Pancreas (tissue), 10 donors: ENCODE measurements at regions of chr1 and their contacts with region 1.

Region 1: DNA sequence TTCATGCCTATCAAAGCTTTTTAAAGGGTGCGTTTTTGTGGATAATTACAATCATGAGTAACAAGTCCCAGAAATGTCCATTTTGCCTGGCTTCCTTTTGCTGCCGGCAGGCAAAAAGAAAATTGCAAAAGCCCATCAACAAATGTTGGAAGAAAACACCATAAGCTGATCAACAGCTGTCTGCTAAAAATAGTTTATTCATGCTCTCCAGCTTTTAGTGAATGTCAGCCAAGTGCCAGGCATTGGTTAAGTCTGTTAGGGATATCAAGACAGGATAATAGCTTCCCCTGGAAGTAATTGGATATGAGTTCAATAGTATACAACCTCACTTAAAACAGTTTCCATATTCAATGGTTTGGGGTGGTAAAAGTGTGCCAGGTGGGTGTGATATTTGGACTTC is 13.6 kb upstream of the AGMAT start:
- DNase-seq: no peak
- ATAC-seq: no peak
- H3K4me3 ChIP-seq: no peak overlapping the region
- H3K27ac ChIP-seq: no peak overlapping the region
- H3K4me1 ChIP-seq: peaks cover 0 to 4% (median 0%) of the 10 kb centered on the region in 3 donors
- H3K27me3 ChIP-seq: no peaks in the 10 kb centered on the region
- CTCF ChIP-seq: no peak

Region 2: DNA sequence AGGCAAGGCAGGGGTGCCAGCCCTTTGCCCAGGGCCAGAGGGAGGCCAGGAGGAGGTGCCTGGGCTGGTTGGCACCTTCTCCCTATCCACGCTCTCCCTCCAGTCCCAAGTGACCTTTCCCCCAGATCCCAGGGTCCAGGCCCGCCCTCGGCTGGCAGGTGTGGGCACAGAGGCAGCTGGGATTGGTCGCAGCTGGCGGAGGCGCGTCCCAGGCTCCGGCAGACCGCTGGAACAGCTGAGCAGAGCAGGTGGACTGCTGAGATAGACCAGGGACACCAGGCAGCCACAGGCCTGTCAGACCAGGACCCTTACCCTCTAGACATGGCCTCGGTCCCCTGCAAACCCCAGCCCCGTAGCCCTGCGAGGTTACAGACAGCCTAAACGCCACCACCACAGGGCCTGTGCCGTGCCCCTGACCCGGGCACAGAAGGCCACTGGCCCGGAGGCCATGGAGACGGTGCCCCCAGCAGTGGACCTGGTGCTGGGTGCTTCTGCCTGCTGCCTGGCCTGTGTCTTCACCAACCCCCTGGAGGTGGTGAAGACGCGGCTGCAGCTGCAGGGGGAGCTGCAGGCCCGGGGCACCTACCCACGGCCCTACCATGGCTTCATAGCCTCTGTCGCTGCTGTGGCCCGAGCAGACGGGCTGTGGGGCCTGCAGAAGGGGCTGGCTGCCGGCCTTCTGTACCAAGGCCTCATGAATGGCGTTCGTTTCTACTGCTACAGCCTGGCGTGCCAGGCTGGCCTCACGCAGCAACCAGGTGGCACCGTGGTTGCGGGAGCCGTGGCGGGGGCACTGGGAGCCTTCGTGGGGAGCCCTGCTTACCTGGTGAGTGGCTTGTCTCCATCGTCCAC is 137.8 kb after region 1 on chr1 and contains the start of gene SLC25A34:
- intact Hi-C with region 1: loop called in 2 of 3 experiments (anchors 5 to 10 kb)
- DNase-seq: peak; percentile 92 to 99 (median 96)
- ATAC-seq: peak; percentile 88 to 91 (median 89)
- H3K4me3 ChIP-seq: peak within 1 kb of the TSS in 2 of 4 donors; percentile 12 to 20
- H3K27ac ChIP-seq: peak within 1 kb of the TSS; percentile 79 to 97 (median 84)
- H3K4me1 ChIP-seq: peaks cover 32 to 37% (median 37%) of the 10 kb centered on the region in 3 donors
- H3K27me3 ChIP-seq: no peaks in the 10 kb centered on the region
- CTCF ChIP-seq: no peak
- total RNA-seq, gene SLC25A34: 0.57 to 1.9 (median 1.8) TPM

Region 3: DNA sequence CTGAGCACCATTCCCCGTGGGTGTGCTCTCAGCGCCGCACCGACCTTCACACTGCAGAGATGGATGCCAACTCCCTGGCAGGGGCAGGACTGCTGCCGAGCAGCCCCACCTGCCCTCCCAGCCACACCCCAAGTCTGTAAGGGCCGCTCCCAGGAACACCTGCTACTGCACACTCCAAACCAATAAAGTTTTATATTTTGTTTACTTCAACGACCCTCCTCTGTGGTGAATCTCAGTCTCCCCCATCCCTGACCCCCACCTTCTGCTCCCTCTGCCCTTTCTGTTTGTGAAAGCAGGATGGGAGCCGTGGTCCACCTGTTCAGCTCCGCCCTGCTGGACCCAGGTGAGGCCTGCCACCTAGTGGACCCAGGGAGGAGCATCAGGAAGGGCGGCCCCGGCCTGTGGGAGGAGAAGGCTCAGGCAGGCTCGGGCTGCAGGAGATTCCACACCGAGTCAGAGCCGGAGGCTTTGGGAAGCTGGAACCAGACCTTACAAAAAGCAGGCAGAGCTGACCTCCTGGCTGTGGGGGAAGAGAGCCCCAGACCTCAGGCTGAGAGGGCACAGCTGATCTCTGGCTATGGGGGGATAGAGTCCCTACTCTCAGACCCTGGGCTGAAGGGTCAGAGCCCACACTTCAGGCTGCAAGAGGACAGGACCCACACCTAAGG is 142.9 kb after region 1 on chr1:
- intact Hi-C with region 1: loop called in 2 of 3 experiments (anchors 5 to 10 kb)
- DNase-seq: peak; percentile 80 to 96 (median 89)
- ATAC-seq: peak; percentile 73 to 91 (median 89)
- H3K4me3 ChIP-seq: no peak overlapping the region
- H3K27ac ChIP-seq: no peak overlapping the region
- H3K4me1 ChIP-seq: peaks cover 18 to 22% (median 19%) of the 10 kb centered on the region in 3 donors
- H3K27me3 ChIP-seq: no peaks in the 10 kb centered on the region
- CTCF ChIP-seq: peak; percentile 79 to 94 (median 83)

Region 4: GRCh38 chr1:16078925-16079656 is 480.7 kb after region 1 on chr1:
- intact Hi-C with region 1: no loop called
- DNase-seq: peak; percentile 72 to 86 (median 80)
- ATAC-seq: peak; percentile 65 to 87 (median 83)
- H3K4me3 ChIP-seq: no peak overlapping the region
- H3K27ac ChIP-seq: no peak overlapping the region
- H3K4me1 ChIP-seq: no peaks in the 10 kb centered on the region
- H3K27me3 ChIP-seq: no peaks in the 10 kb centered on the region
- CTCF ChIP-seq: peak; percentile 69 to 86 (median 82)